ENCODE measurements at regions of chr1 and their contacts with region 1.

Region 1: DNA sequence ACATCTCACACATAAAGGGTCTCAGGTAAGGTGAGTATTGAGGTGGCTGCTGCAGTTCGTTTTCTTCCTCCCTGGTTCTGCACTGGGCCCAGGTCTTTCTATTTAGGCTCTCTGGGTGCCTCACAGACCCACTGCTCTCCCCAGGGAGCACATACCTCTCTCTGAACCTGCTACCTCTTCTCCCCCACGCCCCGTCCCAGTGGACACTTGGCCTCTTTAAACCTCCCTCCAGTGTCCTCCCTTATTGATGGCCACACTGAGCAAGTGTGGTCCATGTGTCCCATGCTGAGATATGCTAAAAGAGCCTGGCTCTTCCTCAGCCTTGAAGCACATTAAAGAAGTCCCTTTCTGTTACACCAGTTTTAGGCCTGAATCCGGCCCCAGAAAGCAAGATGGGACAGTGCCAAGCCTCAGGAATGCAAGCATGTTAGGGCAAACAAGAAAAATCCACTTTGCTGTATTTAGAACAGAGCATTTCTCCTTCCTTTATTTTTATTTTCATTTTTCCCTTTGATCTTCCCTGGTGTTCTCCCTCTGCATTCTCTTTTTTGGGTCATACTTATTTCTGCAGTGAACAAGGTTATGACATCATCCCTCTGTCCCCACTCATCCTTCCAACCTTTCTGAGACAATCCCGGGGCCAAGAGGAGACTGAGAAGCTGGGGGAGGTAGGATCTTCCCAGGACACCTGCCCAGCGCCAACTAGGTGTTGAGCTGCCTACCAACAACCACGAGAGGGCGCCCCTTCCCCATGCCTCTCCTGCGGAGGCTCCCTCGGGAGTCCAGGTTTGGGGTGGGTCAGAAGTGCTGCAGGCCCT is 5.0 kb upstream of the CHI3L2 start:
- DNase-seq: peak; percentile 91
- ATAC-seq: peak; percentile 24
- H3K4me3 Mint-ChIP-seq: peak overlapping the region; percentile 62
- H3K27ac Mint-ChIP-seq: peak overlapping the region; percentile 88
- H3K4me1 Mint-ChIP-seq: peaks cover 93% of the 10 kb centered on the region
- H3K27me3 Mint-ChIP-seq: no peaks in the 10 kb centered on the region

Region 2: DNA sequence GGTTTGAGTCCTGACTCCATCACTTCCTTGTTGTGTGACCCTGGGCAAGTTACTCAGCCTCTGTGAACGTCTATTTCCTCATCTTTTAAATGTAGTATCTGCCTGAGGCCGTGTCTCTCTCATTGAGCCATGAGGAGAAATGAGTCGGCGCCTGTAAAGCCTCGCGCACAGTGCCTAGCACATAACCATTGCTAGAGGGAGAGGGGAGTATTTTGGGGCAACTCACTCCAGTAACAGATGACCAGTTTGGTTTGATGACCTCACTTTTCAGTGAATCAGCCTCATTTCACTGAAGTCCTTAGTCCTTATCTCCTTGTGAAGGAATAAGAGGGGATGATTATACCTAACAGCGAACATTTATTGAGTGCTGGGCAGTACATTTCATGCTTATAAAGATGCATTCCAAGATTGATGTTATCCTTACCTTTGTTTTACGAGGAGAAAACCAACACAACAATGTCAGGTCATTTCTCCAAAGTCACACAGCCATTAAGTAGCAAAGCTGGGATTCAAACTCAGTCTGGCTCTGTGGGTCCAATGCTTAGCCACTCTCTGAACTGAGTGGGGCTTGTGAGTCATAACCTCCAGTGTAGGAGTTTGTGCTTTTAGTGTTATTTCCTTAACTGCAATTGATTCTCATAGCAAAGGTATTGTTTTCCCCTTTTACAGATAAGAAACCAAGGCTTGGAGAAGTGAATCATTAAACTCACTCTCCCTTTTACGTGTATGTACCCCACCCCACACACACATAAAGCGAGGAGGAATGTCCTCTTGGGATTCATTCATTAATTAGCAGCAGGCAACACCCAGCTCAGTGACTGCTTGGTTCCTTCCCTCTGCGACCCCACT is 986.5 kb before region 1 on chr1:
- CTCF ChIA-PET with region 1: no interaction called
- POLR2A ChIA-PET with region 1: no interaction called
- intact Hi-C with region 1: loop called in 1 of 2 experiments (anchors 5 kb)
- DNase-seq: peak; percentile 85
- ATAC-seq: peak; percentile 90
- H3K4me3 Mint-ChIP-seq: peak overlapping the region; percentile 42
- H3K27ac Mint-ChIP-seq: peak overlapping the region; percentile 95
- H3K4me1 Mint-ChIP-seq: peaks cover 57% of the 10 kb centered on the region
- H3K27me3 Mint-ChIP-seq: no peaks in the 10 kb centered on the region

Region 3: DNA sequence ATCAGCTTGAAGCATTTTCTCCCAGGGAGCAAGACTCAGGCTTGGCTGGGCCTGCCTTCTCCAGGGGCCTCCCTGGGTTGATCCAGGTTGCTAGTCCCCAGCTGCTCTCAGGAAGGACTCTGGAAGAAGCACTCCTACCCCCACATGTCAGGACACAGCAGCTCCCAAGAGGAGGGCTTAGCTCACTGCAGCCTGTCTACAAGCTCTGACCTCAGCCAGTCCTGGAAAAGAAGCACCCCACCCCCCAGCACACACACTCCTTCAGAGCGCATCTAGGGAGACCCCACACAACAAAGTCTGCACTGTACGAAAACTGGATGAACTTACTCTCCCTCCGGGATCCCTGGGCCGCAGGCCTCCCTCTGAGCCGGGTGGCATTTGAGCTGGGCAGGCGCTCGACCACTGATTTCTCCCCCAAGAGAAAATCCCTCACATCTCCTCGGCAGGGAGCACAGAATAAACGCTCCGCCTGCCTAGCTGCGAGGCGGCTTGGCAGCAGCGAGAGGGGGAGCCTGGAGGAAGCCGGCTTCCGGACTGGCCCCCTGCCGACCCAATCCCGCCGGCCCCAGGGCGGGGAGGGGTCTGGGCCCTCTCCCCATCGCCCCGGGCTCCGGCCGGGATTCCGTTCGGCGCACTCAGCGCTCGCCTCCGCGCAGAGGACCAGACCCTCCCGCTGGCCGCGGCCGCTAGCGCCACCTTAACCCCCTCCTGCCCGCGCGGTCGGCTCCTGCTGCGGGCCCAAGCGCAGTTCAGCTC is 616.4 kb before region 1 on chr1 and contains the start of gene KCNA2:
- CTCF ChIA-PET with region 1: no interaction called
- POLR2A ChIA-PET with region 1: no interaction called
- intact Hi-C with region 1: no loop called
- DNase-seq: peak; percentile 24
- ATAC-seq: peak; percentile 7
- H3K4me3 Mint-ChIP-seq: peak within 1 kb of the TSS; percentile 68
- H3K27ac Mint-ChIP-seq: no peak within 1 kb of the TSS
- H3K4me1 Mint-ChIP-seq: peaks cover 8% of the 10 kb centered on the region
- H3K27me3 Mint-ChIP-seq: peaks cover 48% of the 10 kb centered on the region
- total RNA-seq, gene KCNA2: 0.25 to 0.37 TPM

Region 4: DNA sequence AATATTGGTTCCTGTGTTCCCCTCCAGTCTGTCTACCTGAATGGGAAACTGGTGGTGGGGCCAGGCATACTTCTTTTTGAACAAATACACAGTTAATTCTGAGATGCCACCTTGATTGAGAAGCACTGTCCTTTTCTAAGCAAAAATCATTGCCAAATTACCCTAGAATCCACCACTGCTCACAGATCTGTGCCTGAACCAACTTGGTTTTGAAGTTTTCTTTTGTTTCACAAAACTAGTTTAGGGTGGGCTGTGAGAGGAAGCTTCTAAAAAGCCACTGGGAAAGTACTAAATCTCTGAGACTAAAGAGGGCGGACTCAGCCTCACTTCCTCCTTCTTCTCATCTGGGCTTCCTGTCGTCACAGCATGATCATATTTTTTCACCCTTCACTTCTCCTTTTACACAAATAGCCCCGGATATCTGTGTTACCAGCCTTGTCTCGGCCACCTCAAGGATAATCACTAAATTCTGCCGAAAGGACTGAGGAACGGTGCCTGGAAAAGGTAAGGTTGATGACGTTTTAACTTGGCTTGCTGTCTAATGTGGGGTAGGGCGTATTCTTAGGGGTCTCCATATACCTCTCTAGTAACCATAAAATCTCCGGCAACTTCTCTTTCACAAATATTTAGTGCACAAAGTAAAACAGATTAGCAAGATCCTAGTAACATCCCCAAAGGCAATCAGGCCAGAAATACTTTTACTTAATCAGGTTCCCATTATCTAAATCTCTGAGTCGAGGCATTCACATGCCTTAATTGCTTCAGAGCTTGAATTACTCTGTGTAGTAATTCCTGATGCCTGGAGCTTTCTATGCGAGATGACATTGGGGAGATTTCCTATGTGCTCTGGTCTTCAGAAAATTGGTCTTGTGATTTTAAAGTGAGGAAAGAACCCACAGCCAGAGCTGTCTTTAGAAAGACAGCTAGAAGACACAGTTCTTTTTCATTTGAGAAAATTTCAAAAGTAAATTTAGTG is 349.5 kb before region 1 on chr1 and contains the start of gene CD53:
- CTCF ChIA-PET with region 1: no interaction called
- POLR2A ChIA-PET with region 1: interaction called, 4 read pairs
- intact Hi-C with region 1: loop called in 1 of 2 experiments (anchors 5 kb)
- DNase-seq: peak; percentile 62
- ATAC-seq: peak; percentile 33
- H3K4me3 Mint-ChIP-seq: peak within 1 kb of the TSS; percentile 85
- H3K27ac Mint-ChIP-seq: peak within 1 kb of the TSS; percentile 95
- H3K4me1 Mint-ChIP-seq: peaks cover 39% of the 10 kb centered on the region
- H3K27me3 Mint-ChIP-seq: no peaks in the 10 kb centered on the region
- total RNA-seq, gene CD53: 238 to 244 TPM

Region 5: DNA sequence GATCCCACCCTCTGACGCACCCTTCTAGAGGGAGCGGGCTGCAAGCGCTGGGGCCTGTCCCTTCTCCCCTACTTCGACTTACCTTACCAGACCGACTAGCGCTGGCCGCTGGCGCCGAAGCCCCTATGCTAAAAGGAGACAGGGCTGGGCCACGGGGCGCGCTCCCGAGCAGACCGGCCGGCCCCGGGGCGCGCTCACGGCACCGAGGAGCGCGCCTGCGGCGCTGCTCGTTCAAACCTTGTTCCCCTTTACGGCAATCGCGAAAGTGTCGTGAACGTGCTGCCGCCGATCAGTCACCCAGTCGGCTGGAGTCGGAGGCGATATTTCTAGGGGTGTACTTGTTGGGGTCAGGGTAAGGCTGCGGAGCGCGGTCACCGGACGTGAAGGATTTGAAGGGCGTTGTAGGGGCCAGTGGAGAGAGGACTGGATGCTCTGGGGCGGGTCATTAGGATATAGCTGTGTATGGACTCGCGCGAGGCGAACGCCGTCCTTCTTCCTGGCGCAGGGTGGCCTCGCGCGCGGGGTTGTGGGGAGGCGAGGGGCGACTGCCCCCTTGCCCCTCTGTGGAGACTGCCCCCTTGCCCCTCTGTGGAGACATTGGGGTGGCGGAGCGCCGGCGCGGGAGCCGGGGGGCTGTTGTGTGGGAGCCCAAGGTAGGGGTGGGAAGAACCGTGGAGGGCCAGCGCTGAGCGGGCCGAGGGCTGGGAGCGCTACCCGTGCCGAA is 82.4 kb before region 1 on chr1 and contains the starts of genes CEPT1 and DRAM2:
- CTCF ChIA-PET with region 1: interaction called, 4 read pairs
- POLR2A ChIA-PET with region 1: interaction called, 3 read pairs
- intact Hi-C with region 1: loop called (anchors 1 to 2 kb)
- DNase-seq: peak; percentile 98
- ATAC-seq: peak; percentile 78
- H3K4me3 Mint-ChIP-seq: peak within 1 kb of the TSS; percentile 95
- H3K27ac Mint-ChIP-seq: peak within 1 kb of the TSS; percentile 99
- H3K4me1 Mint-ChIP-seq: peaks cover 53% of the 10 kb centered on the region
- H3K27me3 Mint-ChIP-seq: no peaks in the 10 kb centered on the region
- total RNA-seq, gene CEPT1: 34.7 to 49.1 TPM
- total RNA-seq, gene DRAM2: 30.4 to 34.4 TPM

Region 6: DNA sequence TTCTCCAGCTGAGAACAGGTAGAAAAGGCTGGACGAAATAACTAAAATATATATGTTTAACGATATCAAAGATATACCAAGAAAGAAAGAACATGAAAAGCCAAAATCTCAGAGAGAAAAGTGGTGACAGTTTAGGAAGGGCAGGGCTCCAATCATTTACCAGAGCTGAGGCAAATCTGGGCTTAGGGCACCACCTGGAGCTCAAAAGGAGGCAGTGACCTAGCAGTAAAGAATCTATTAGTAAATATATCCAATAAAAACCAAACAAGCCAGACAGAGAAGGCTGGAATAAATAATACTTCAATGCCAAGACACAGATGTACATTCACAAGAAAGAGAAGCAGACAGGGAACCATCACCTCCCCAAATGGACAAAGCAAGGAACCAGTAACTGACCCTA is 111.7 kb after region 1 on chr1:
- CTCF ChIA-PET with region 1: interaction called, 37 read pairs
- POLR2A ChIA-PET with region 1: no interaction called
- intact Hi-C with region 1: loop called (anchors 1 kb)
- DNase-seq: peak; percentile 67
- ATAC-seq: peak; percentile 88
- H3K4me3 Mint-ChIP-seq: no peak overlapping the region
- H3K27ac Mint-ChIP-seq: no peak overlapping the region
- H3K4me1 Mint-ChIP-seq: no peaks in the 10 kb centered on the region
- H3K27me3 Mint-ChIP-seq: no peaks in the 10 kb centered on the region

Region 7: GRCh38 chr1:111441573-111442192 is 219.2 kb after region 1 on chr1:
- CTCF ChIA-PET with region 1: interaction called, 7 read pairs
- POLR2A ChIA-PET with region 1: interaction called, 4 read pairs
- intact Hi-C with region 1: loop called (anchors 2 to 5 kb)
- DNase-seq: peak; percentile 81
- ATAC-seq: peak; percentile 76
- H3K4me3 Mint-ChIP-seq: no peak overlapping the region
- H3K27ac Mint-ChIP-seq: peak overlapping the region; percentile 72
- H3K4me1 Mint-ChIP-seq: peaks cover 48% of the 10 kb centered on the region
- H3K27me3 Mint-ChIP-seq: no peaks in the 10 kb centered on the region

Region 8: DNA sequence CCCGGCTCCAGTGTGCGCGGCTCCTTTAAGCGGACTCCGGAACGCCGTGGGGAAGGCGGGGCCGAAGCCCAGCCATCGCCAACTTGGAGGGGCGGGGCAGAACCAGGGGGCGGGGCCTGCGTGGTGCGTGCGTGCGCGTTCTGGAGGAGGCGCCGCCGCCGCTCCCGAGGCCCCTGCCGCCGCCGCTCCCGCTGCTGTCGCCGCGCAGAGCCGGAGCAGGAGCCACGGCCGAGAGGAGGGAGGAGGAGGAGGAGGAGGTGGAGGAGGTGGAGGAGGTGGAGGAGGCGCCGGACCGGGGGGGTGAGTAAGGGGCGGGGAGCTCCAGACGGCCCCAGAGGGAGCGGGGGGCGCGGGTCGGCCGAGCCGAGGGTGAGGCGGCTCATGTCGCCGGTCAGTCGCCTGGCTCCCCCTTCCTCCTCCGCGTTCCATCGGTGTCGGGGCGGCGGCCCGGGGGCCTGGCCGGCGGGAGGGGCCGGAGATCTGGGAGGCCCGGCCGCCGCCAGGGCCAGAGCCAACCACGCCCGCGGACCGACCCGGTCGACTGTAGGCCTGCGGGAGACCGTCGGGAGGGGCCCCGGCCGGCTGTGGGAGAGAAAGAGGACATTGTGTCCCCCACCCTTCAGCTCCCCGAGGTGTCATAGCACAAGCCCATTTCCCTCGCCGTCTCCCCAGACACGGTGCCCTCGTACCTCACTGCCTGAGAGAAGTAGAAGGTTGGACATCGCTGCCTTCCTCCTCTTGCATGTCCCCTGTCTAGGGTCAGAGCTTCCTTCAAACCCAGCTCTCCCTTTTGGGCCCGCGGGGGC is 397.3 kb after region 1 on chr1 and contains the start of gene RAP1A:
- CTCF ChIA-PET with region 1: no interaction called
- POLR2A ChIA-PET with region 1: interaction called, 3 read pairs
- intact Hi-C with region 1: loop called in 1 of 2 experiments (anchors 5 kb)
- DNase-seq: peak; percentile 98
- ATAC-seq: peak; percentile 71
- H3K4me3 Mint-ChIP-seq: peak within 1 kb of the TSS; percentile 96
- H3K27ac Mint-ChIP-seq: peak within 1 kb of the TSS; percentile 97
- H3K4me1 Mint-ChIP-seq: peaks cover 72% of the 10 kb centered on the region
- H3K27me3 Mint-ChIP-seq: no peaks in the 10 kb centered on the region
- total RNA-seq, gene RAP1A: 182 to 214 TPM